PC-9 (cell line): ENCODE measurements at regions of chr19 and their contacts with region 1.

Region 1: DNA sequence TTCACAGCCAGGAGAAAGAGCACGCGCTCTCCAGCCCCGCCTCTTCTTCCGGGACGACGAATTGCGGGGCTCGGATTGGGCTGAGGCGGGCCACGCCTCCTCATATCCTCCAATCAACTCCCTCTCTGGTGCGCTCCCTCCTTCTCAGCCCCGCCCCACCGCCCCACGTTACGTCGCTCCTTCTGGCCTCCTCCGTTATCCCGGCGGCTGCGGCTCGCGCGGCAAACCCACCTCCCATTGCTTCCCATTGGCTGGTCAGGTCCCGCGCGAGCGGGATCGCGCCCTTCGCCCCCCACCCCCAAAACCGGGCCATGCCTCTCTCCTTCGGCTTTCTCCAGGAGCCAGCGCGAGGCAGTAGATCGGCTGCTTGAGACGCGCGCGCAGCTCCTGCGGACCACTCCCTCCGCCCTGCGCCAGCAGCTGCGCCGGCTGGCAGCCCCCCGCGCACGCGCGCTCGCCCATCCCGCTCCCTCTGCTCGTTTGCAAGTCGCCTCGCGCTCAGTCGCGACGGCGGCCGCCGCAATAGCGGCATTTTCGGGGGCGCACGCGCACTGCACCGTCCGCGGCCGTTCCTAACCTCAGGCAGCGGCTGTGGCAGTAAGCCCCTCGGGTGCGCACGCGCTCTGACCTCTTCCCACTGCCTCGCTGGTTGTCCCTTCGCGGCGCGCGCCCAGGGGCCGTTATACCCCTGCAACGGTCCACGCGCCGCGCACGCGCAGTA is 512 bp upstream of the ARHGAP35 start:
- DNase-seq: peak; percentile 96 to 99
- H3K4me3 ChIP-seq: peak overlapping the region; percentile 79
- H3K27ac ChIP-seq: peak overlapping the region; percentile 87
- H3K4me1 ChIP-seq: peaks cover 47% of the 10 kb centered on the region
- H3K27me3 ChIP-seq: no peaks in the 10 kb centered on the region
- CTCF ChIP-seq: no peak

Region 2: GRCh38 chr19:46788262-46788967 is 71.9 kb before region 1 on chr19 and contains the start of gene SLC1A5:
- CTCF ChIA-PET with region 1: no interaction called
- POLR2A ChIA-PET with region 1: interaction called, 16 read pairs
- intact Hi-C with region 1: no loop called
- DNase-seq: peak; percentile 94 to 98
- H3K4me3 ChIP-seq: peak within 1 kb of the TSS; percentile 98
- H3K27ac ChIP-seq: peak within 1 kb of the TSS; percentile 92
- H3K4me1 ChIP-seq: peaks cover 40% of the 10 kb centered on the region
- H3K27me3 ChIP-seq: no peaks in the 10 kb centered on the region
- CTCF ChIP-seq: no peak
- total RNA-seq, gene SLC1A5: 218 and 264 TPM in 2 replicates

Region 3: GRCh38 chr19:46924874-46925547 is 64.7 kb after region 1 on chr19:
- CTCF ChIA-PET with region 1: interaction called, 10 read pairs
- POLR2A ChIA-PET with region 1: interaction called, 4 read pairs
- intact Hi-C with region 1: loop called (anchors 1 kb)
- DNase-seq: peak; percentile 66 to 98
- H3K4me3 ChIP-seq: peak overlapping the region; percentile 50
- H3K27ac ChIP-seq: peak overlapping the region; percentile 95
- H3K4me1 ChIP-seq: peaks cover 65% of the 10 kb centered on the region
- H3K27me3 ChIP-seq: no peaks in the 10 kb centered on the region
- CTCF ChIP-seq: 0 out of 2 replicates have a peak, but pooled peaks have one; percentile 8

Region 4: DNA sequence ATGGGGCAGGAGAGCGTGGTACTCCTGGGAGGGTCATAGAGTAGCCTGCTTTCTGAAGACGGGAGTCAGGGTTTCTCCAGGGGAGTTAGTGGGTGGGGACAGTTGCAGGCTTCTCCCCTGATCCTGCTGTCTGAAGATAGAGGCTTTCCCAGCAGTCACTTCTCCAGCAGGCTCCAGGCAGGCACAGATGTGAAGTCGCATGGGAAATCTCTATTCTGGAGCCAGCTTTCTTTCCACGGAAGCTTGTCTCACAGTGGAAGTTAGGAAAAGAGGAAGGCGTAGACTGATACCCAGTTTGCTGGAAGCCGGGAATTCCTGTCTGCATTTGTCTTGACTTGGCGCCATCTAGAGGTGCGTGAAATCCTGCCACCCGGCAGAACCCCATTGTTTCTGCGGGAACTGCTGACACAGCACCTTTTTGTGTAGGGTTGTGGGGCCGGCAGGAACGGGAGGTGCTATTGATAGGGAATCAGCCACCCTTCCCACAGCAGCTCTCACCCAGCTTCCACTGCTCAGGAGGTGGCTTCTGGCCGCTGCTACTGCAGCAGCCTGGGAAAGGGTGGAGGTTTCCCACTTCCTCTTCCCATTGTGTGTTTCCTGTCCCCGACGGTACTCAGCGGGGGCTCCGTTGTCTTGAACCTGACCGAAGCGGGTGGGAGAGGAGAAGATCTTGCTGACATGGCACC is 130.8 kb after region 1 on chr19:
- CTCF ChIA-PET with region 1: interaction called, 3 read pairs
- POLR2A ChIA-PET with region 1: no interaction called
- intact Hi-C with region 1: loop called (anchors 1 kb)
- DNase-seq: peak; percentile 61 to 74
- H3K4me3 ChIP-seq: no peak overlapping the region
- H3K27ac ChIP-seq: no peak overlapping the region
- H3K4me1 ChIP-seq: no peaks in the 10 kb centered on the region
- H3K27me3 ChIP-seq: no peaks in the 10 kb centered on the region
- CTCF ChIP-seq: peak; percentile 93

Region 5: DNA sequence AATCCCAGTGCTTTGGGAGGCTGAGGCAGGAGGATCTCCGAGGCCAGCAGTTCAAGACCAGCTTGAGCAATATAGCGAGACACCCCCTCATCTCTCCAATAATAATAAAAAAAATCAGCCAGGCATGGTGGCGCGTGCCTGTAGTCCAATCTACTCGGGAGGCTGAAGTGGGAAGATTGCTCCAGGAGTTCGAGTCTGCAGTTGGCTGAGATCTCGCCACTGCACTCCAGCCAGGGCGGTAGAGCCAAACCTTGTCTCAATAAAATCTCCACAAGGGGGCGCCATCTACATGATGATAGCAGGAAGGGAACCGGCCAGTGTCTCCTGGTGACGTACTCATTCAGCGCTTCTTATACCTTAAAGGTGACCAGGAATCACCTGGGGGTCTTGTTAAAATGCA is 435.8 kb after region 1 on chr19:
- CTCF ChIA-PET with region 1: no interaction called
- POLR2A ChIA-PET with region 1: no interaction called
- intact Hi-C with region 1: no loop called
- DNase-seq: peak; percentile 70 to 71
- H3K4me3 ChIP-seq: no peak overlapping the region
- H3K27ac ChIP-seq: no peak overlapping the region
- H3K4me1 ChIP-seq: 0 out of 2 replicates have a peak, but pooled peaks cover 2% of the 10 kb centered on the region
- H3K27me3 ChIP-seq: no peaks in the 10 kb centered on the region
- CTCF ChIP-seq: peak; percentile 95